ENCODE measurements at regions of chr1 and their contacts with region 1.

Region 1: DNA sequence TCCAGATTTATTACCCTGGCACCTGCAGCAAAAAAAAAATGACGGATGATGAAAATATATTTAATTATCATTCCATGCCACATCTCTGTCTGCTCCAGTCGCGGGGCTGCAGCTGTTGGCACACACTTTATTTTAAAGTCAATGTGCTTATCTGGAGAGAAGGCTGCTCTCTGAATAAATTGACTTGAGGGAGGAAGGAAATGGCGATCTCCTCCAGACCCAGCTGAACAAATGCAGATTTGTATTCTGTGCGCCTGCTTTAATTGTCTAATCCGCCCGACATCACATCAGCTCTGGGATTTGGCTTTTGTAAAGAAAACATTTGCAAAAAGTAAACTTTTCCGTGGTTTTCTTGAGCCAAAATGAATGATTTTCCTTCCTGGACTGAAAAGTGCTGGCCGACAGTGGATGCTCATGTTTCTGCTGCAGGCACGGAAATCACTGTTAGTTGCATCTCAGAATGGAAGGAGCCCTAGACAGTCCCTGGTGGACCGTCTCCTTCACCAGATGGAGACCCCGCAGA is 150.2 kb downstream of the CAMTA1 start:
- DNase-seq: peak; percentile 99
- H3K4me3 ChIP-seq: peak overlapping the region in 1 of 3 experiments; percentile 50
- H3K27ac ChIP-seq: peak overlapping the region; percentile 83
- H3K4me1 ChIP-seq: peaks cover 9% of the 10 kb centered on the region
- H3K27me3 ChIP-seq: peaks cover 3 to 13% of the 10 kb centered on the region in 2 experiments
- CTCF ChIP-seq: no peak
- POLR2A ChIP-seq: peak; percentile 34

Region 2: DNA sequence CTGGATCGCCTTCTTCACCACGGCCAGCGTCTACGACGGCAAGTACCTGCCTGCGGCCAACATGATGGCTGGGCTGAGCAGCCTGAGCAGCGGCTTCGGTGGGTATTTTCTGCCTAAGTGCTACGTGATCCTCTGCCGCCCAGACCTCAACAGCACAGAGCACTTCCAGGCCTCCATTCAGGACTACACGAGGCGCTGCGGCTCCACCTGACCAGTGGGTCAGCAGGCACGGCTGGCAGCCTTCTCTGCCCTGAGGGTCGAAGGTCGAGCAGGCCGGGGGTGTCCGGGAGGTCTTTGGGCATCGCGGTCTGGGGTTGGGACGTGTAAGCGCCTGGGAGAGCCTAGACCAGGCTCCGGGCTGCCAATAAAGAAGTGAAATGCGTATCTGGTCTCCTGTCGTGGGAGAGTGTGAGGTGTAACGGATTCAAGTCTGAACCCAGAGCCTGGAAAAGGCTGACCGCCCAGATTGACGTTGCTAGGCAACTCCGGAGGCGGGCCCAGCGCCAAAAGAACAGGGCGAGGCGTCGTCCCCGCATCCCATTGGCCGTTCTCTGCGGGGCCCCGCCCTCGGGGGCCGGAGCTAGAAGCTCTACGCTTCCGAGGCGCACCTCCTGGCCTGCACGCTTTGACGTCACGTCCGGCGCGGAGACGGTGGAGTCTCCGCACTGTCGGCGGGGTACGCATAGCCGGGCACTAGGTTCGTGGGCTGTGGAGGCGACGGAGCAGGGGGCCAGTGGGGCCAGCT is 355.9 kb before region 1 on chr1 and contains the start of gene ZBTB48:
- CTCF ChIA-PET with region 1: no interaction called
- POLR2A ChIA-PET with region 1: no interaction called
- dilution Hi-C with region 1: no loop called
- intact Hi-C with region 1: no loop called
- DNase-seq: peak; percentile 97
- H3K4me3 ChIP-seq: peak within 1 kb of the TSS; percentile 57 to 98 (median 65)
- H3K27ac ChIP-seq: peak within 1 kb of the TSS; percentile 57
- H3K4me1 ChIP-seq: peaks cover 14% of the 10 kb centered on the region
- H3K27me3 ChIP-seq: no peaks in the 10 kb centered on the region
- CTCF ChIP-seq: no peak
- POLR2A ChIP-seq: peak; percentile 98
- total RNA-seq, gene ZBTB48: 25.1 and 29.2 TPM in 2 replicates

Region 3: GRCh38 chr1:6948861-6949260 is 13.4 kb after region 1 on chr1:
- CTCF ChIA-PET with region 1: no interaction called
- POLR2A ChIA-PET with region 1: no interaction called
- dilution Hi-C with region 1: no loop called
- intact Hi-C with region 1: no loop called
- DNase-seq: no peak
- H3K4me3 ChIP-seq: no peak overlapping the region
- H3K27ac ChIP-seq: no peak overlapping the region
- H3K4me1 ChIP-seq: no peaks in the 10 kb centered on the region
- H3K27me3 ChIP-seq: no peaks in the 10 kb centered on the region
- CTCF ChIP-seq: no peak
- POLR2A ChIP-seq: no peak

Region 4: DNA sequence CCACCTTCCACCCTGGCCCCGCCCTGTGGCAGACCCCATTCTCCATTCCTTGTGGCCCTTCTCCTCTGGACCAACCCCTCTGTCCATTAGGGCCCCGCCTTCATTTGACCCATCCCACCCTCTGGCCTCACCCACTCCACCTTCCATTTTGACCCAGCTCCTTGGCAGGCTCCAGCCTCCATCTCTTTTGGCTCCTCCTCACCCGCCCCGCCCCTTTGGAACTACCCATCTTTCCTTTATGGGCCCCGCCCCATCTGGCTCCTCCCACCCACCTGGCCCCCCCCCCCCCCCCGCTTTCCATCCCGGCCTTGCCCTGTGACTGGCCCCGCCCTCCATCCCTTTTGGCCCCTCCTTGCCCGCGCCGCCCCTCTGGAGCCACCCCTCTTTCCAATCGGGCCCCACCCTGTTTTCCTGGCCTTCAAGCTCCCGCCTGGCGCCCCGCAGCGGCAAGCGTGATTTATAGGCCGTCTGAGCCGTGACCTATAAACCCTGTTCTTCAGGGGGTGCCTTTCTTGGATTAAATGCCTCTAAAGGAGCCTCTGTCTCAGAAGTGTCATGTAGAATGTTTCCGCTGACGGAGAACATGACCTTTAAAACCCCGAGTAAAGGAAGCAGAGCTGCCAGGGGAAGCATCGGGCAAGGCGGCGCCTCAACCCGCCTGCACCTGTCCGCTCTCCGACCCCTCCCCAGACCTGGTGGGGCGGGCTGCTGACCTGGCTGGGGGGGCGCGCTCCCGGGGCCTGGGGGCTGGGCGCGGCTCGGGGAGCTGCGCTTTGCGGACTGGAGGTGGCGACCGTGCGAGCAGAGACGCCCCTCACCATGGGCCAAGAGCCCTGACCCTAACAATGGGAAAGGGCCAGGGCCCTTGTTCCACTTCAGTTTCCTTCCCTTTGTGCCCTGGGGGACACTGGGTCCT is 27.8 kb after region 1 on chr1:
- CTCF ChIA-PET with region 1: interaction called, 3 read pairs
- POLR2A ChIA-PET with region 1: no interaction called
- dilution Hi-C with region 1: no loop called
- intact Hi-C with region 1: loop called (anchors 1 kb)
- DNase-seq: peak; percentile 30
- H3K4me3 ChIP-seq: no peak overlapping the region
- H3K27ac ChIP-seq: no peak overlapping the region
- H3K4me1 ChIP-seq: no peaks in the 10 kb centered on the region
- H3K27me3 ChIP-seq: peaks cover 0 to 6% of the 10 kb centered on the region in 2 experiments
- CTCF ChIP-seq: no peak
- POLR2A ChIP-seq: no peak

Region 5: GRCh38 chr1:7770997-7771822 is 835.8 kb after region 1 on chr1 and contains the start of gene VAMP3:
- CTCF ChIA-PET with region 1: no interaction called
- POLR2A ChIA-PET with region 1: no interaction called
- dilution Hi-C with region 1: no loop called
- intact Hi-C with region 1: loop called (anchors 1 kb)
- DNase-seq: peak; percentile 83
- H3K4me3 ChIP-seq: peak within 1 kb of the TSS; percentile 86 to 99 (median 96)
- H3K27ac ChIP-seq: peak within 1 kb of the TSS; percentile 74
- H3K4me1 ChIP-seq: peaks cover 12% of the 10 kb centered on the region
- H3K27me3 ChIP-seq: no peaks in the 10 kb centered on the region
- CTCF ChIP-seq: no peak
- POLR2A ChIP-seq: peak; percentile 70
- total RNA-seq, gene VAMP3: 137 and 148 TPM in 2 replicates